Activated CD8-positive, alpha-beta memory T cell treated with anti-CD3 and anti-CD28 coated beads, Interleukin-2, amount 10 ng/mL, durations not matched to agents 7 days and 5 days (primary cell): ENCODE measurements at regions of chr1 and their contacts with region 1.

Region 1: GRCh38 chr1:88683541-88684481 is at the start of gene PKN2:
- DNase-seq: peak; percentile 98
- ATAC-seq: peak; percentile 95
- H3K4me3 Mint-ChIP-seq: peak within 1 kb of the TSS; percentile 92
- H3K27ac Mint-ChIP-seq: peak within 1 kb of the TSS; percentile 97
- H3K4me1 Mint-ChIP-seq: peaks cover 18% of the 10 kb centered on the region
- H3K27me3 Mint-ChIP-seq: peaks cover 6% of the 10 kb centered on the region
- total RNA-seq, gene PKN2: 20.0 to 25.8 TPM

Region 2: DNA sequence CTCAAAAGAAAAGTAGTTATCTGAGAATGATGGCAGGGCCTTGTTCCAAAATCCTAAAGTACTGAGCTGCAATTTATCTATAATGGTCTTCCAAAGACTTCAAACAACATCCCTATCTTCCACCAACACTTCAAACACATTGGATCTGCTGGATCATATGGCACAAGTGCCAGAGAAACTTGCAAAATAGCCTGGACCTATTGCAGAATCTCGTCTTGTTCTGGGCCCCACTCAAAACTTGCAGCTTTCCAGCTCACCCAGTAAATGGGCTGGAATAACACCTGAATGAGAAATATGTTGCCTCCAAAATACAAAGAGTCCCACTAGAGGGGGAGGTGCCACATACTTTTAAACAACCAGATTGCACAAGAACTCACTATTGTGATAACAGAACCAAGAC is 43.8 kb before region 1 on chr1:
- CTCF ChIA-PET with region 1: no interaction called
- DNase-seq: no peak
- ATAC-seq: no peak
- H3K4me3 Mint-ChIP-seq: no peak overlapping the region
- H3K27ac Mint-ChIP-seq: no peak overlapping the region
- H3K4me1 Mint-ChIP-seq: no peaks in the 10 kb centered on the region
- H3K27me3 Mint-ChIP-seq: peaks cover 11% of the 10 kb centered on the region

Region 3: GRCh38 chr1:88655685-88656299 is 28.0 kb before region 1 on chr1:
- CTCF ChIA-PET with region 1: interaction called, 56 read pairs
- DNase-seq: no peak
- ATAC-seq: no peak
- H3K4me3 Mint-ChIP-seq: no peak overlapping the region
- H3K27ac Mint-ChIP-seq: no peak overlapping the region
- H3K4me1 Mint-ChIP-seq: peaks cover 10% of the 10 kb centered on the region
- H3K27me3 Mint-ChIP-seq: peaks cover 14% of the 10 kb centered on the region

Region 4: DNA sequence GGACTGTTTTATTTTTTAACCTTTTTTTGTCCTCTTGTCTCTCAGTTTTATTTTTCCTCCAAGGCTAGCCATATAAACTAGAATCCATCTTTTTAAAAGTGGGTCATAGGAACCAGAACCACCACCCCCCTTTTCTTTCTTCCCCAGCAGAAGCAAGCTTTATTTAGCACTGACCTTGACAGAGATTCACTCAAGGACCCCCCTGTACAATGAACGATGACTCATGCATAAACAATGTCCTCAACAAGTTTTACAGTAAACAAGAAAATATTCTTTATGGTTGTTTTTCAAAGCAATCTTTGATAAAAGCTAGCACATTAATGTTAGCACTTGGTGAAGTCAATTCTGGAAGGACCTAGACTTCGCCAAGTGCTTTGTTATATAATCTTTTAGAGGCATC is 14.3 kb after region 1 on chr1:
- CTCF ChIA-PET with region 1: interaction called, 13 read pairs
- DNase-seq: no peak
- ATAC-seq: no peak
- H3K4me3 Mint-ChIP-seq: no peak overlapping the region
- H3K27ac Mint-ChIP-seq: no peak overlapping the region
- H3K4me1 Mint-ChIP-seq: peaks cover 5% of the 10 kb centered on the region
- H3K27me3 Mint-ChIP-seq: no peaks in the 10 kb centered on the region

Region 5: GRCh38 chr1:88877382-88877825 is 193.6 kb after region 1 on chr1:
- CTCF ChIA-PET with region 1: interaction called, 12 read pairs
- DNase-seq: no peak
- ATAC-seq: no peak
- H3K4me3 Mint-ChIP-seq: no peak overlapping the region
- H3K27ac Mint-ChIP-seq: no peak overlapping the region
- H3K4me1 Mint-ChIP-seq: peaks cover 28% of the 10 kb centered on the region
- H3K27me3 Mint-ChIP-seq: no peaks in the 10 kb centered on the region